Right ventricle myocardium inferior (tissue), 1 donor: ENCODE measurements at regions of chr15 and their contacts with region 1.

Region 1: DNA sequence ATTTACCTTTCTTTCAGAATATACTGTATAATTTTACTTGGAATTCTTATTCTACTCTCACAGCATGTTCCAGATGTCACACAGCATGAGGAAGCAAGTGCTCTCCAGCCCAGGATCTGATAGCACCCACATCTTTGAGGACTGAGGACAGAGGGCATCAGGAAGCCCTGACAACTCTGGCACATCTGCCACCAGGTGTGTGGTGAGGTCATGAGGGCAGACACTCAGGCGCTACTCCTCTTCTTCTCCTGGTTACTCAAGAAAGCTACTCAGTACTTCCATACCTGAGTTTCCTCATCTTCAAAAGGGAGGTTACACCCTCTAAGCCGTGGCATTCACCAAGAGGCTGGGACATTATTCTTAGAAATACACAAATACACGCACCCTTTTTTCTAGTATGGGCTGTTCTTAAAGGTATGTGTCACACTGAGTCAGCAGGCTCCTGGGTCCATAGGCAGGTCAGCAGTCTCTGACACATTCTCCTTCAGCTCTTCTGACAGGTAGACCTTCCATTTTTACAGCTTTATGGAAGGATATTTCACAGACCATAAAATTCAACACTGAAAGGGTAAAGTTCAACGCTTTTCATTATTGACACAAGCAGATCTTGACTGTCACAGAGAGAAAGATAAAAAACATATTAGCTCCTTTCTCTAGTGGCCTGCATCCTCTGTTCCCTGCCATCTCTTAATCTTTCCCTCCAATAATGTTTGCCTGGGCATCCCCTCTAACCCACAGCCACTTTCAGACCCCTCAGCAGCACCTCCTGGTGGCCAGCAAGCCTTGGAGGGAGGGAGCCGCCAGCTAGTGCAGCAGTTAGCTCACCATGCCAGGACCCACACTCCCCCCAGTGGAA is 103.2 kb upstream of the TJP1 start:
- DNase-seq: peak; percentile 76
- ATAC-seq: peak; percentile 91

Region 2: GRCh38 chr15:29747837-29748417 is 177.5 kb before region 1 on chr15:
- intact Hi-C with region 1: loop called (anchors 1 kb)
- DNase-seq: no peak
- ATAC-seq: no peak

Region 3: DNA sequence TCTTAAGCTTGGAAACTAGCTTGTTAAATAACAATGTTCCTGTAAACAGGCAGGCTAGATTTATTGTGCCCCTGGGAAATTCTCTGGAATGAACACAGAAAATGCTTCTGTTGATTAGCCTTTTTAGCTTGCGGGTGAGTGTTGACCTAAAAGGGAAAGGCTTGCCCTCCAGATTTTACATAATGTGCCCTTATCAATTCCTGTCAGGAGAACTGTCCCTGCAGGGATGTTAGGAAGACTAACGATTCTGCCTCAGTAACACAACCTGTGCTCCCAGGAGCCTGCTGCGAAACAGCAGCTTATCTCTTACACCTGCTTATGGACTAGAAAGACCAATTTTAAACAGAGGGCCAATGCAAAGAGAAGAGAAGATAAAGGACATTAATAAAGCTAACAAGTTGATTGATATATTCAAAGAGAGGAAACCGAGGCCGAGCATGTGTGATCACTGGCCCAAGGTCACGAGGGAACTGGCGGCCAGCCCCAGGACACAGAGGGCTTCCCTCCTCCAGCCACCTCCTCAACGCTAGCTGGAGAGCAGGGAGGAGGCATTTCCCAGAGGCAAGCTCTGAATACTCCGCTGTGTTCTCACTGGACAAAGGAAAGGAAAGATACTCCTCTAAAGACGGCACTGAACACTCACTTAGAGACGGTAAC is 54.8 kb before region 1 on chr15:
- intact Hi-C with region 1: loop called (anchors 10 kb)
- DNase-seq: no peak
- ATAC-seq: peak; percentile 66